ENCODE measurements at regions of chr12 and their contacts with region 1.

Region 1: DNA sequence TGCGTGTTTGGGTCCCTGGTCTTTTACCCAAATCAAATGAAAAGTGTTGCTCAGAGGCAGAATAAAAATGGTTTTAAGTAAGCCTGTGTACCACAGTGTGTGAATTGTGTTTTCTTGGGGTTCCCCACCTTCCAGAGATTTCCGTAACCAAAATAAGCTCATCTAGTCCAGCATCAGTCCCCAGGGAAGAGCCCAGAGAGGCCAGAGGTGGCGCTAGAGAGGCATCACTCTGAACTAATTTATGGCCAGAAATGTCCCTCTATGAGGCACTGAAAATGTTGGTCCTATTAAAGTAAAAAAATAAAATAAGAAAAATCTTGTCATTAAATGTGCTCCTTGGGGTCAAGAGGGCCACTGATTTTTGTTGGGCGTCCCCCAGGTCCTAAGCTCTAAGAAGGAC is 24.9 kb upstream of the PRKAB1 start:
- DNase-seq: no peak
- ATAC-seq: no peak
- H3K4me3 ChIP-seq: no peak overlapping the region
- H3K27ac ChIP-seq: no peak overlapping the region
- H3K4me1 ChIP-seq: no peaks in the 10 kb centered on the region
- H3K27me3 ChIP-seq: peaks cover 3% of the 10 kb centered on the region; the same call in 1 of the 2 replicates
- CTCF ChIP-seq: peak; percentile 60

Region 2: GRCh38 chr12:118271183-118271582 is 1371.8 kb before region 1 on chr12:
- CTCF ChIA-PET with region 1: no interaction called
- POLR2A ChIA-PET with region 1: interaction called, 11 read pairs
- in situ Hi-C with region 1: no loop called
- intact Hi-C with region 1: no loop called
- DNase-seq: no peak
- ATAC-seq: no peak
- H3K4me3 ChIP-seq: no peak overlapping the region
- H3K27ac ChIP-seq: no peak overlapping the region
- H3K4me1 ChIP-seq: no peaks in the 10 kb centered on the region
- H3K27me3 ChIP-seq: no peaks in the 10 kb centered on the region
- CTCF ChIP-seq: no peak

Region 3: GRCh38 chr12:119229837-119230236 is 413.1 kb before region 1 on chr12:
- CTCF ChIA-PET with region 1: no interaction called
- POLR2A ChIA-PET with region 1: no interaction called
- in situ Hi-C with region 1: no loop called
- intact Hi-C with region 1: no loop called
- DNase-seq: no peak
- ATAC-seq: peak; percentile 83
- H3K4me3 ChIP-seq: no peak overlapping the region; a peak in 1 of 4 replicates
- H3K27ac ChIP-seq: no peak overlapping the region
- H3K4me1 ChIP-seq: no peaks in the 10 kb centered on the region
- H3K27me3 ChIP-seq: peaks cover 7% of the 10 kb centered on the region; the same call in 1 of the 2 replicates
- CTCF ChIP-seq: no peak

Region 4: GRCh38 chr12:119659289-119659897 is 16.4 kb after region 1 on chr12:
- CTCF ChIA-PET with region 1: interaction called, 14 read pairs
- POLR2A ChIA-PET with region 1: no interaction called
- in situ Hi-C with region 1: no loop called
- intact Hi-C with region 1: no loop called
- DNase-seq: no peak
- ATAC-seq: no peak
- H3K4me3 ChIP-seq: no peak overlapping the region
- H3K27ac ChIP-seq: no peak overlapping the region
- H3K4me1 ChIP-seq: no peaks in the 10 kb centered on the region
- H3K27me3 ChIP-seq: no peaks in the 10 kb centered on the region
- CTCF ChIP-seq: peak; percentile 87; the same call in 1 of the 2 replicates

Measured in Panc1 (cell line).